CD4-positive, alpha-beta T cell (primary cell): ENCODE measurements at regions of chr9 and their contacts with region 1.

Region 1: DNA sequence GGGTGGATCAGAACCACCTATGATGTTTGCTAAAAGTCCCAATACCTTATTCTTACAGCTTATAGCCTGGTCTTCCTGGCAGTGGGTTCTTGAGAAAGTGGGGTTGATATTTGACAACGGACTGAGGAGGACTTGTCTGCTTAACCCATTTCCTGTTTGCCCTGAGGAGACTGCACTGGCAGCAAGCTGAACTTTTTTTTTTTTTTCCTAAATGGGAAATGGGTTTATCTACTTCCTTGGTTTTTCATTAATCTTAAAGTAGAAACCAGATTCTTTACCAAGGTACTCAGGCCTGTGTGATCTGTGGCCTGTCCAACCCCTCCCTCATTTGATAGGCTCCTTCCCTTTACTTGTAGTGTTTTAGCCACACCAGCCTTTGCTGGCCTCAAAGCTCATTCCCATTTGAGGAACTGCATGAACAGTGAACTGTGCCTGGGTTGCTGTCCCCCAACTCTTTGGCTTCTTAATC is 47.1 kb downstream of the C9orf57 start:
- DNase-seq: no peak
- ATAC-seq: no peak
- H3K4me3 ChIP-seq: no peak overlapping the region
- H3K4me3 Mint-ChIP-seq: no peak overlapping the region
- H3K27ac ChIP-seq: no peak overlapping the region
- H3K27ac Mint-ChIP-seq: no peak overlapping the region
- H3K4me1 ChIP-seq: peaks cover 3% of the 10 kb centered on the region
- H3K4me1 Mint-ChIP-seq: peaks cover 16% of the 10 kb centered on the region
- H3K27me3 ChIP-seq: no peaks in the 10 kb centered on the region
- H3K27me3 Mint-ChIP-seq: no peaks in the 10 kb centered on the region
- CTCF ChIP-seq: no peak

Region 2: DNA sequence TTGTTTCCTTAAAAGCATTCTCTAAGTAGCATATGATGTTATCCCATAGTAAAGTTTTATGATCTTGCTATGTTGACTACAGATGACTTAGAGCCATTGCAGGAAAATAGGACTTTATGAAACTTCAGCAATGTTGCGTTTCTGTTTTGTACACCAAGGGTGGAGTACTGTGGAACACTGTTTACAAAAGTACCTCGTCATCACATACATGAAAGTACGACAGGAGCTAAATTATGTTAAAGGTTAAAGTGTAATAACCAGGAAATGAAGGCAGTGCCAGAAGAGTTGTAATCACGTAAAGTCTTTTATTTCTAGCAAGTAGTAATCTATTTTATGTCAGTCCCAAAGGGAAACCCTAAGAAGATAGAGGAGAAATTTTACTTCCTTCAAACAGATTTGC is 51.0 kb before region 1 on chr9:
- CTCF ChIA-PET with region 1: no interaction called
- POLR2A ChIA-PET with region 1: no interaction called
- intact Hi-C with region 1: loop called in 1 of 2 experiments (anchors 10 kb)
- DNase-seq: no peak
- ATAC-seq: no peak
- H3K4me3 ChIP-seq: no peak overlapping the region
- H3K4me3 Mint-ChIP-seq: no peak overlapping the region
- H3K27ac ChIP-seq: no peak overlapping the region
- H3K27ac Mint-ChIP-seq: no peak overlapping the region
- H3K4me1 ChIP-seq: no peaks in the 10 kb centered on the region
- H3K4me1 Mint-ChIP-seq: no peaks in the 10 kb centered on the region
- H3K27me3 ChIP-seq: no peaks in the 10 kb centered on the region
- H3K27me3 Mint-ChIP-seq: no peaks in the 10 kb centered on the region
- CTCF ChIP-seq: no peak